ENCODE measurements at regions of chr12 and their contacts with region 1.

Region 1: DNA sequence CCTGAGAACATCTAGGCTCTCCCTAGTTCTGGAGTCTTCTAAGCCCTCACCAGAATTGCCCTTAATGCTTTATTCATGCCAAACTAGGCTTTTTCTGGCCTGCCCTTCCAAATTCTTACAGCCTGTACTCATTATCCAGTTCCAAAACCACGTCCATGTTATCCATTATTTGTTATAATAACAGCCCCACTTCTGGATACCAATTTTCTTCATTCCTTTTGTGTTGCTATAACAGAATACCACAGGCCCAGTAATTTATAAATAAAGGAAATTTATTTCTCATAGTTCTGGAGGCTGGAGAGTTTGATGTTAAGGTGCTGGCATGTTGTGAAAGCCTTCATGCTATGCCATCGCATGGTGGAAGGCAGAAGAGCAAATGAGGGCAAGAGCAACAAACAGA is 68.0 kb upstream of the AMIGO2 start:
- DNase-seq: no peak
- H3K4me3 ChIP-seq: no peak overlapping the region
- H3K27ac ChIP-seq: no peak overlapping the region
- H3K4me1 ChIP-seq: no peaks in the 10 kb centered on the region
- H3K27me3 ChIP-seq: no peaks in the 10 kb centered on the region
- CTCF ChIP-seq: no peak

Region 2: DNA sequence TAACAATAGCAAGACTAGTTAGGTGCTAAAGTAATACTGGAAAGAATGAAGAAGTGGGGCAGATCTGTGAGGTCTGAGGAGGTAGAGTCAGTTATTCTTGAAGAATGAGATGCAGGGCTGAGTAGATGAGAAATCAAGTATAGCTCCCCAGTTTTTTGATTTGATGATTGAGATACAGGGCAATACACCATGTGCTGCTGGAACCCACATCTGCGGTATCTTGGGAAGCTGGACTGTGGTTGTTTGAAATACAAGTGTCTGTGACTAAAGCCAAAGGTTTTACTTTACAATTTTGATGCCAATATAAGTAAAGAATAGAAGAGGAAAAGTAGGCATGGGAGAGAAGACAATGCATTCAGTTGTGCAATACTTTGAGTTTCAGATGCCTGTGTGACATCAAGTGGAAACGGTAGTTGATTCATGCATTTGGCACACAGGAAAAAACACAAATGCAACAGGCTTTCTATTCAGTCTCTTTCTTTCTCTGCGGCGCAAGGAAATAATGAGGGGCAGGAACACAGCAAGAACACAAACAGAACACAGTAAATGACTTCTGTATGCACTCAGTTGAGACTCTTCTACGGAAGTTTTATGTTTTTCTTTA is 585.0 kb before region 1 on chr12:
- CTCF ChIA-PET with region 1: no interaction called
- POLR2A ChIA-PET with region 1: no interaction called
- intact Hi-C with region 1: no loop called
- DNase-seq: peak; percentile 83
- H3K4me3 ChIP-seq: no peak overlapping the region
- H3K27ac ChIP-seq: peak overlapping the region; percentile 20
- H3K4me1 ChIP-seq: peaks cover 26% of the 10 kb centered on the region
- H3K27me3 ChIP-seq: no peaks in the 10 kb centered on the region
- CTCF ChIP-seq: no peak

Region 3: DNA sequence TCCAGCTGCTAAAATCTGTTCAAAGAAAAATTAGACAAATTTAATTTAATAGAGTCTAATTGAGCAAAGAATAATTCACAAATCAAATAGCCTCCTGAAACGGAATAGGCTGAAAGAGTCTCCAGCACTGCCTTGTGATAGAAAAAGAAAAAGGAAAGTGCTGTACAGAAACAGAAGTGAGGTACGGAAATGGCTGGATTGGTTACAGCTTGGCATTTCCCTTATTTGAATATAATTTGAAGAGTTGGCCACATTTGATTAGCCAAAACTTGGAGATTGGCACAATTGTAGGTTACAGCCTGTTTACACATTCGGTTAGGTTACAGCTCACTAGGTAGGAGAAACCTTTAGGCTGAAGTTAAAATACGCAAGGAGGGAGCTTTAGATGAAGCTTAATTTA is 93.1 kb before region 1 on chr12:
- CTCF ChIA-PET with region 1: no interaction called
- POLR2A ChIA-PET with region 1: no interaction called
- intact Hi-C with region 1: no loop called
- DNase-seq: no peak
- H3K4me3 ChIP-seq: no peak overlapping the region
- H3K27ac ChIP-seq: no peak overlapping the region
- H3K4me1 ChIP-seq: no peaks in the 10 kb centered on the region
- H3K27me3 ChIP-seq: no peaks in the 10 kb centered on the region
- CTCF ChIP-seq: no peak

Region 4: DNA sequence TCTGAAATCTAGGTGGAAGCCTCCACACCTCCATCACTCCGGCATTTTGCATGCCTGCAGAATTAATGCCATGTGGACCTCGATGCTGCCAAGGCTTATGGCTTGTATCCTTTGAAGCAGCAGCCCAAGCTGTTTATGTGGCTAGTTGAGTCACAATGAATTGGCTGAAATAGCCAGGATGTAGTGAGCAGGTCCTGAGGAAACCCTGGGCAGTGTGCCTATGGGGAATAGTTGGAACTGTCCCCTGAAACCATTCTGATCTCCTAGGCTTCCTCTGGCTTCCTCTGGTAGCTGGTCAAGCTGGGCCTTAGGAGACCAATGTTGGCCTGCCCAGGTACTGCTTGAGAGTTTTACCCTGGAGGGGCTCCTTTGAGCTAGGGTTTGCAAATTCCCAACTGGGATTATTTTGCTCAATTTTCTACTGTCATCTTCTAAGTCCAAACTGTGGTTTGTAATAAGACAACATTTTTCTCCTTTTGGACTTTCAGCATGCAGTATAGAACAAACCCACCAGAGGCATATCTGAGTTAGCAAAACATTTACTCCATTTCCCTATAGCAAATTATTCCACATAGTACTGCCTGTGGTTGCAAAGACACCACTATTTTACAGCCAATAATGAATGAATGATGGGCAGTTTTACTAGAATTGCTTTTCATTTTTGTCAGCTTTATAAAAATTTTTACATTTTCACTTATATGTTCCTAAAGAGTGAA is 17.1 kb after region 1 on chr12:
- CTCF ChIA-PET with region 1: no interaction called
- POLR2A ChIA-PET with region 1: no interaction called
- intact Hi-C with region 1: no loop called
- DNase-seq: no peak
- H3K4me3 ChIP-seq: no peak overlapping the region
- H3K27ac ChIP-seq: no peak overlapping the region
- H3K4me1 ChIP-seq: peaks cover 10% of the 10 kb centered on the region
- H3K27me3 ChIP-seq: no peaks in the 10 kb centered on the region
- CTCF ChIP-seq: no peak

Region 5: GRCh38 chr12:47186246-47186645 is 38.5 kb after region 1 on chr12:
- CTCF ChIA-PET with region 1: interaction called, 10 read pairs
- POLR2A ChIA-PET with region 1: no interaction called
- intact Hi-C with region 1: no loop called
- DNase-seq: no peak
- H3K4me3 ChIP-seq: no peak overlapping the region
- H3K27ac ChIP-seq: no peak overlapping the region
- H3K4me1 ChIP-seq: no peaks in the 10 kb centered on the region
- H3K27me3 ChIP-seq: no peaks in the 10 kb centered on the region
- CTCF ChIP-seq: no peak